ENCODE measurements at regions of chr2 and their contacts with region 1.

Region 1: GRCh38 chr2:134411828-134412638 is 158.2 kb downstream of the MGAT5 start:
- DNase-seq: peak; percentile 86
- ATAC-seq: peak; percentile 98
- H3K4me3 ChIP-seq: no peak overlapping the region
- H3K27ac ChIP-seq: peak overlapping the region; percentile 81
- H3K4me1 ChIP-seq: peaks cover 27% of the 10 kb centered on the region
- H3K27me3 ChIP-seq: no peaks in the 10 kb centered on the region
- CTCF ChIP-seq: peak; percentile 83 to 98 (median 93); a peak in 5 of 6 replicates
- EP300 ChIP-seq: peak in 1 of 2 experiments; percentile 23; a peak in 1 of 4 replicates
- POLR2A ChIP-seq: no peak
- RAD21 ChIP-seq: peak; percentile 98

Region 2: DNA sequence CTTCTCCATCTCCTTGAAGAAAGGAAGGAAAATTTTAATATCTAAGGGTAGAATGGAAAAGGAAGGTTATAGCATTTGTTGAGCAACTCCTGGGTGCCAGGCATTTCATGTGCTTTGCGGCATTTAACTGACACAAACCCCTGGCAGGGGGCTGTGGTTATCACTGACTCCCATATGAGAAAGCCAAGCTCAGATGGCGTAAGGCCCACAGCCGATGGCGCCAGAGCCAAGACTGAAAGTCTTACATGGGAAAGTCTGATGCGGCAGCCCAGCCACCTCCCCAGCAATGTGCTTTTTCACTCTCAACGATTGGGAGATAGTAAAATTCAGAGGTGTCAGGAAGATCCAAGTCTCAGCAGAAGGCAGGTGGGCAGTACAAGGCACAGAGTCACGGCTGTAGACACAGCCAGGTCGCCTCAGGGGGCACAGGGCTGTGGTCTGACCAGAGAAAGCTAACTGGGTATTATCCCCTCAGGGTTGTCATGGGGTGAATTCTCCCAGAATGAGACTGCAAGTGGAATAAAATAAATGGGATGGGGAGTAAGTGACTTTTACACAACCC is 519.6 kb before region 1 on chr2:
- CTCF ChIA-PET with region 1: interaction called, 67 read pairs
- POLR2A ChIA-PET with region 1: interaction called, 3 read pairs
- RAD21 ChIA-PET with region 1: interaction called, 55 read pairs
- SMC1A ChIA-PET with region 1: interaction called, 18 read pairs
- in situ Hi-C with region 1: loop called (anchors 5 kb)
- intact Hi-C with region 1: loop called (anchors 2 kb)
- DNase-seq: no peak
- ATAC-seq: no peak
- H3K4me3 ChIP-seq: no peak overlapping the region
- H3K27ac ChIP-seq: no peak overlapping the region
- H3K4me1 ChIP-seq: no peaks in the 10 kb centered on the region
- H3K27me3 ChIP-seq: no peaks in the 10 kb centered on the region; a peak in 1 of 4 replicates
- CTCF ChIP-seq: no peak
- EP300 ChIP-seq: no peak
- POLR2A ChIP-seq: no peak
- RAD21 ChIP-seq: no peak

Region 3: GRCh38 chr2:134218930-134219658 is 192.9 kb before region 1 on chr2:
- CTCF ChIA-PET with region 1: interaction called, 6 read pairs
- POLR2A ChIA-PET with region 1: no interaction called
- RAD21 ChIA-PET with region 1: interaction called, 4 read pairs
- SMC1A ChIA-PET with region 1: interaction called, 15 read pairs
- in situ Hi-C with region 1: no loop called
- intact Hi-C with region 1: no loop called
- DNase-seq: no peak
- ATAC-seq: peak; percentile 46
- H3K4me3 ChIP-seq: no peak overlapping the region
- H3K27ac ChIP-seq: peak overlapping the region; percentile 70
- H3K4me1 ChIP-seq: peaks cover 38% of the 10 kb centered on the region
- H3K27me3 ChIP-seq: no peaks in the 10 kb centered on the region
- CTCF ChIP-seq: 0 out of 6 replicates have a peak, but pooled peaks of 1 of the 3 experiments have one; percentile 3
- EP300 ChIP-seq: no peak
- POLR2A ChIP-seq: no peak
- RAD21 ChIP-seq: no peak

Region 4: DNA sequence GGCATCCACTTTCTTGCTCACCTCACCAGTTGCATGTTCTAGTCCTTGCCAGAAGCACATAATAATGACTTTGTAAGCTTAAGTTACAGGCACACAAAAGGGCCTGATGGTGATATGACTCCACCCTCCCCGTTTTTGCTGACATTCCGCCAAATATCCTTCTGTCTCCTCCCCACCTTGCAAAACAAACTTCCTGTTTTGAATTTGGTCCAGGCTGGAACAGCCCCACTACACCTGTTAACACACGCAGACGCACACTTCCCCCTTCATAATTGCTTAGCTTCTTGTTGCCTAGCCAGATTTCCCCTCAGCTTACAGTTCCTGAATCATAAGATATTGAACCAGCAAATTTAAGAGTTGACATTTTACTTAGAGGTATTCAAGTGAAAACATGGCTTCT is 158.2 kb before region 1 on chr2 and contains the start of gene MGAT5:
- CTCF ChIA-PET with region 1: interaction called, 11 read pairs
- POLR2A ChIA-PET with region 1: interaction called, 3 read pairs
- RAD21 ChIA-PET with region 1: interaction called, 6 read pairs
- SMC1A ChIA-PET with region 1: interaction called, 12 read pairs
- in situ Hi-C with region 1: no loop called
- intact Hi-C with region 1: loop called (anchors 1 kb)
- DNase-seq: no peak
- ATAC-seq: peak; percentile 8
- H3K4me3 ChIP-seq: peak within 1 kb of the TSS; percentile 21; the same call in 1 of the 2 replicates
- H3K27ac ChIP-seq: peak within 1 kb of the TSS; percentile 67
- H3K4me1 ChIP-seq: peaks cover 82% of the 10 kb centered on the region
- H3K27me3 ChIP-seq: no peaks in the 10 kb centered on the region
- CTCF ChIP-seq: no peak
- EP300 ChIP-seq: no peak
- POLR2A ChIP-seq: no peak
- RAD21 ChIP-seq: no peak
- polyA plus RNA-seq, gene MGAT5: 9.1 to 9.8 TPM

Region 5: DNA sequence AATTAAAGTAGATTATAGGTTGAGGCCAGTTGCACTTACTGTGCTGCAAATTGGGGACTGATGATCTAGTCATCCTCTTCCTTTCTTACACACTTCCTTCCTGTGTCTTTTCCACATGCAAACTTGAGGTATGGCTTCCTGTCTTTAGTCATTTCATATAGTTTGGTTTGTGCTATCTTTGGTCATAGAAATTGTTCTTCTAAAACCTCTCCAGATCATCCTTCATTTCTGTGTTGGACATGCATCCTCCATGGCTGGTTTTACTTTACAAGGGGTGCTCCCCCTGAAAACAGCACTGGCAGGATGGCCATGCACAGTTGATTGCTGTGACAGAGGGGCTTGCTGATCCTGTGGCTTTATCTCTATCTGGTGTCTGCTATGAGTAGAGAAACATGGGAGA is 121.7 kb before region 1 on chr2:
- CTCF ChIA-PET with region 1: interaction called, 8 read pairs
- POLR2A ChIA-PET with region 1: no interaction called
- RAD21 ChIA-PET with region 1: interaction called, 10 read pairs
- SMC1A ChIA-PET with region 1: interaction called, 7 read pairs
- in situ Hi-C with region 1: no loop called
- intact Hi-C with region 1: no loop called
- DNase-seq: peak; percentile 60
- ATAC-seq: peak; percentile 38
- H3K4me3 ChIP-seq: peak overlapping the region; percentile 11; the same call in 1 of the 2 replicates
- H3K27ac ChIP-seq: peak overlapping the region; percentile 82
- H3K4me1 ChIP-seq: peaks cover 94% of the 10 kb centered on the region
- H3K27me3 ChIP-seq: no peaks in the 10 kb centered on the region
- CTCF ChIP-seq: no peak
- EP300 ChIP-seq: peak in 1 of 2 experiments; percentile 22; a peak in 1 of 4 replicates
- POLR2A ChIP-seq: no peak
- RAD21 ChIP-seq: peak; percentile 3; the same call in 1 of the 2 replicates

Region 6: DNA sequence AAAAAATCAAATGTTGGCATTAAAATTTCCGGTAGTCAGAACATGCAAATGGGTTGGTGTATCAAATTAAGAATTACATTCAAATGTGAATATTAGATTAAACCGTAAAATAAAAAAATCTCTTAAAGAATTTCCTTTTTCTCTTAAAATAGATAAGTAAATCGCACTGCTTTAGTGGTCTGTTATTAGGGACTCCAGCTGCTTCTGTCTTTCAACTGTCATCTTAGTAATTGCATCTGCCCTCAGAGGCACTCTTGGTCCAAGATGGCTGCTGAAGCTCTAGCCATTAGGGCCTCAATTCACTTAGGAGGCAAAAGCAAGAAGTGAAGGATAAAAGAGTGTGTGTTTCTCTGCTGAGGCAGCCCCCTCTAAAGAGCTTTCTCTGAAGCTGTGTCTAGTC is 25.7 kb before region 1 on chr2:
- CTCF ChIA-PET with region 1: interaction called, 16 read pairs
- POLR2A ChIA-PET with region 1: no interaction called
- RAD21 ChIA-PET with region 1: no interaction called
- SMC1A ChIA-PET with region 1: interaction called, 6 read pairs
- in situ Hi-C with region 1: no loop called
- intact Hi-C with region 1: no loop called
- DNase-seq: no peak
- ATAC-seq: no peak
- H3K4me3 ChIP-seq: no peak overlapping the region
- H3K27ac ChIP-seq: no peak overlapping the region
- H3K4me1 ChIP-seq: peaks cover 6% of the 10 kb centered on the region
- H3K27me3 ChIP-seq: no peaks in the 10 kb centered on the region
- CTCF ChIP-seq: no peak
- EP300 ChIP-seq: no peak
- POLR2A ChIP-seq: no peak
- RAD21 ChIP-seq: no peak

Region 7: GRCh38 chr2:134512734-134513464 is 100.9 kb after region 1 on chr2:
- CTCF ChIA-PET with region 1: no interaction called
- POLR2A ChIA-PET with region 1: no interaction called
- RAD21 ChIA-PET with region 1: no interaction called
- SMC1A ChIA-PET with region 1: no interaction called
- in situ Hi-C with region 1: no loop called
- intact Hi-C with region 1: no loop called
- DNase-seq: no peak
- ATAC-seq: no peak
- H3K4me3 ChIP-seq: no peak overlapping the region
- H3K27ac ChIP-seq: no peak overlapping the region
- H3K4me1 ChIP-seq: no peaks in the 10 kb centered on the region
- H3K27me3 ChIP-seq: peaks cover 0 to 1% of the 10 kb centered on the region in 2 experiments; a peak in 2 of 4 replicates
- CTCF ChIP-seq: no peak
- EP300 ChIP-seq: no peak
- POLR2A ChIP-seq: no peak
- RAD21 ChIP-seq: no peak

Region 8: DNA sequence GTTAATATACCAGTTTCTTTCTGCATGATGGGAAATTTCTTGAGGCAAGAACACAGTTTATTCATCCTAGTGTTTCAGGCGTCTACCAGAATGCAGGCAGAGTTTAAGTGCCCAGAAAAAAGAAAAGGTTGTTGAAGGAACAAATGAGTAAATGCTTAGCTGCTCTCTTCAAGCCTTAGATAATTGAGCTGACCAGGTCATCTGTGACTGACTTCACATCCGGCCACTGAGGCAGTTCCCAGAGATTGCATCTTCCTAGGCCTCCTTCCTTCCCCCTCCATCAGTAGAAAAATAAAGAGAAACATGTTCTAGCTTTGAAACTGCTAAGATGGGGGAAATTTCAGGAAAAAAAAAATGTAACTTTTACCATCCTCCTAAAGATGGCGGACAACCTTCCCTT is 316.1 kb after region 1 on chr2:
- CTCF ChIA-PET with region 1: no interaction called
- POLR2A ChIA-PET with region 1: no interaction called
- RAD21 ChIA-PET with region 1: no interaction called
- SMC1A ChIA-PET with region 1: no interaction called
- in situ Hi-C with region 1: no loop called
- intact Hi-C with region 1: no loop called
- DNase-seq: no peak
- ATAC-seq: no peak
- H3K4me3 ChIP-seq: no peak overlapping the region
- H3K27ac ChIP-seq: no peak overlapping the region
- H3K4me1 ChIP-seq: no peaks in the 10 kb centered on the region
- H3K27me3 ChIP-seq: peaks cover 0 to 7% of the 10 kb centered on the region in 2 experiments; a peak in 1 of 4 replicates
- CTCF ChIP-seq: no peak
- EP300 ChIP-seq: no peak
- POLR2A ChIP-seq: no peak
- RAD21 ChIP-seq: no peak